ENCODE measurements at regions of chr12 and their contacts with region 1.

Region 1: GRCh38 chr12:89352492-89353187 is at the start of gene DUSP6:
- DNase-seq: peak; percentile 83 to 89
- ATAC-seq: peak; percentile 67 to 85 (median 73)
- H3K4me3 ChIP-seq: peak within 1 kb of the TSS; percentile 89
- H3K4me3 Mint-ChIP-seq: peak within 1 kb of the TSS; percentile 98
- H3K27ac ChIP-seq: peak within 1 kb of the TSS; percentile 90
- H3K27ac Mint-ChIP-seq: peak within 1 kb of the TSS; percentile 93 to 95
- H3K4me1 ChIP-seq: peaks cover 40% of the 10 kb centered on the region
- H3K4me1 Mint-ChIP-seq: peaks cover 58 to 74% of the 10 kb centered on the region in 2 donors
- H3K27me3 ChIP-seq: no peaks in the 10 kb centered on the region
- H3K27me3 Mint-ChIP-seq: no peaks in the 10 kb centered on the region
- CTCF ChIP-seq: no peak
- total RNA-seq, gene DUSP6: 52.2 to 222 (median 141) TPM

Region 2: DNA sequence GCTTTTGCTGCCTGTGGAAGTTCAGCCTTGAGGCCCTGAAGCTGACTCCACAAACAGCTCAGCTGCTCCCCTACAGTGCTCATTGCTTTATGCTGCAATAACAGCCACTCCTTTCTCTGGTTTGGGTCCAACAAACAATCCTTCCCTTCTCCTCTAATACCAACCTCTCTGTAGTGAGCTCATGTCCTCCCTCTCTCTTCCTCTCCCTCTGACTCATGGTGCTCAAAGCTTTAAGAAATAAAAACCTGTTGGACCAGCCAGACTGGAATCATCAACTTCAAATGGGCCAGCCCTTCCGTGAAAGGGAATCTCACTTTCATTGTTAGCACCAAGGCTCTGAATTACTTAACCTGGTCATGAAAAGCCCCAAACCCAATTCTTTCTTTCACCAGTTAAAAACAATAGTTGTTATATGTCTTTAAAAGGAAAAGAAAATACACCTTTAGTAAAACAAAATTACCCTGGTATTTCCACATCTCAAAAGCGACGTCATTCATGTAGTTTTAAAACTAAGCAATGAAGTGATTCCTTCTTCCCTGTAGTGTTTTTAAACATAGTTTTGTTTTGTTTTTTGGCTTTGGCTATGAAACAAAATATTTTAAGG is 126.7 kb before region 1 on chr12:
- intact Hi-C with region 1: loop called (anchors 2 kb)
- DNase-seq: no peak
- ATAC-seq: peak; percentile 13 to 30 (median 28)
- H3K4me3 ChIP-seq: no peak overlapping the region
- H3K4me3 Mint-ChIP-seq: peak overlapping the region; percentile 33
- H3K27ac ChIP-seq: peak overlapping the region; percentile 50
- H3K27ac Mint-ChIP-seq: peak overlapping the region; percentile 85 to 89
- H3K4me1 ChIP-seq: peaks cover 30% of the 10 kb centered on the region
- H3K4me1 Mint-ChIP-seq: peaks cover 56 to 70% of the 10 kb centered on the region in 2 donors
- H3K27me3 ChIP-seq: no peaks in the 10 kb centered on the region
- H3K27me3 Mint-ChIP-seq: no peaks in the 10 kb centered on the region
- CTCF ChIP-seq: no peak

Region 3: DNA sequence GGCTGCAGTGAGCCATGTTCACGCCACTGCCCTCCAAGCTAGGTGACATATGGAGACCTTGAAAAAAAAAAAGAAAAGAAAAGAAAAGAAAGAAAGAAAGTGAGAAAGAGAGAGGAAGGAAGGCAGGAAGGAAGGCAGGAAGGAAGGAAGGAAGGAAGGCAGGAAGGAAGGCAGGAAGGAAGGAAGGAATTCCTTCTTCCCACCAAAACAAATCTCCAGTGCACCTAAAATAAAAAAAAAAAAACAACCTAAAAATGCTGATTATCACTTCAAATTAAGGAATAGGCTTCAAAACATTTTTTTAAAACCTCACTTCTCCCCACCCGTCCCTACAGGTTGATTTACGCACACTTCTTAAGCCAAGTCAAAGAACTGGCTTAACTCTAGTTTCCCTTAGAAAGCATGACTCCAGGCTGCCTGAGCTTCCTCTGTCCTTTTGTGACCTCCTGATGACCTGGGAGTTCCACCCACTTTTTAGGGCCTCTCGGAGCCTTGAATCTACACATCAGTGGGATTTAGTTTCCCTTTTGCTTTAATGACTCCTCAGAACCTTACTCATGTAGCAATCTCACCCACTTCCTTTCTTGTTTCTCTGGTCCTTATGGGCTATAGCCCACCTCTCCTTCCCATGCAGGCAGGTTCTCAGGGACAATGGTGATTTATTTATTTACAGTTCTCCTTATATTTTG is 18.9 kb before region 1 on chr12:
- intact Hi-C with region 1: loop called (anchors 2 kb)
- DNase-seq: peak in 1 of 2 donors; percentile 21
- ATAC-seq: peak; percentile 91 to 98 (median 93)
- H3K4me3 ChIP-seq: no peak overlapping the region
- H3K4me3 Mint-ChIP-seq: peak overlapping the region; percentile 86
- H3K27ac ChIP-seq: peak overlapping the region; percentile 47
- H3K27ac Mint-ChIP-seq: peak overlapping the region; percentile 73 to 90
- H3K4me1 ChIP-seq: peaks cover 13% of the 10 kb centered on the region
- H3K4me1 Mint-ChIP-seq: peaks cover 26 to 32% of the 10 kb centered on the region in 2 donors
- H3K27me3 ChIP-seq: no peaks in the 10 kb centered on the region
- H3K27me3 Mint-ChIP-seq: no peaks in the 10 kb centered on the region
- CTCF ChIP-seq: no peak

Region 4: GRCh38 chr12:89370850-89371249 is 18.2 kb after region 1 on chr12:
- intact Hi-C with region 1: no loop called
- DNase-seq: no peak
- ATAC-seq: no peak
- H3K4me3 ChIP-seq: no peak overlapping the region
- H3K4me3 Mint-ChIP-seq: no peak overlapping the region
- H3K27ac ChIP-seq: no peak overlapping the region
- H3K27ac Mint-ChIP-seq: no peak overlapping the region
- H3K4me1 ChIP-seq: peaks cover 8% of the 10 kb centered on the region
- H3K4me1 Mint-ChIP-seq: peaks cover 13 to 14% of the 10 kb centered on the region in 2 donors
- H3K27me3 ChIP-seq: no peaks in the 10 kb centered on the region
- H3K27me3 Mint-ChIP-seq: no peaks in the 10 kb centered on the region
- CTCF ChIP-seq: no peak

Region 5: GRCh38 chr12:89470741-89471509 is 118.3 kb after region 1 on chr12:
- intact Hi-C with region 1: loop called (anchors 2 kb)
- DNase-seq: peak in 1 of 2 donors; percentile 74
- ATAC-seq: peak; percentile 37 to 69 (median 62)
- H3K4me3 ChIP-seq: no peak overlapping the region
- H3K4me3 Mint-ChIP-seq: peak overlapping the region; percentile 53
- H3K27ac ChIP-seq: peak overlapping the region; percentile 88
- H3K27ac Mint-ChIP-seq: peak overlapping the region; percentile 87 to 92
- H3K4me1 ChIP-seq: peaks cover 18% of the 10 kb centered on the region
- H3K4me1 Mint-ChIP-seq: peaks cover 61% of the 10 kb centered on the region in 2 donors
- H3K27me3 ChIP-seq: no peaks in the 10 kb centered on the region
- H3K27me3 Mint-ChIP-seq: no peaks in the 10 kb centered on the region
- CTCF ChIP-seq: peak; percentile 64